A549 (cell line): ENCODE measurements at regions of chr19 and their contacts with region 1.

Region 1: DNA sequence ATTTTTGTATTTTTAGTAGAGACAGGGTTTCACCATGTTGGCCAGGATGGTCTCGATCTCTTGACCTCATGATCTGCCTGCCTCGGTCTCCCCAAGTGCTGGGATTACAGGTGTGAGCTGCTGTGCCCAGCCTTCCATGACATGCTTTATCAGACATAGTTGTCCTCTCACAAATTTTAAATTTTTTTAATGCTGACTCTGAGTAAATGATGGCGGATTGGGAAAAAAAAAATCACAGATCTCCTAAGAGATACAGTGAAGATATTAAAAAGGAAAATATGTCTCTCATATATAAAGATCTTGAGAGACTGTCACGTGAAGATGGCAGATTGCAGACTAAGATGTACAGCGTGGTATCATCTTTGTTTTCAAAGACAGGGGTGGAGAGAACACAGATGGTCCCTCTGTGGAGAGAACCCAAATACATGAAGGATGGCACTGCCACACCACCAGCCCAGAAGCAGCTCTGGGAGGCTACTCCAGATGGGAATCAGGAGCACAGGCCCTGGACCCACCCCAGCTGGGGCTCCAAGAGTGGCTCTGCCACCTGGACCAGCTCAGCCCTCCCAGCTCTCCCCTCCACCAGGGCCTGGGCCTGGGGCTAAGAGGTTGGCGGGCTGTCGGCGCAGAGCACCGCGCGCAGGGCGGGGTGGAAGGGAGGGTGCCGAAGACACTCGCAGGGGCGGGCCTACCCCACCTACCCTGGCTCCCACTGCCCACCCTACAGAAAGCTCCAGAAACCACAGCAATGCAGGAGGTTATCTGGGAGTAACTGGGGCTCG is 20.0 kb upstream of the CCNP start:
- DNase-seq: no peak
- ATAC-seq: no peak; a peak in 2 of 6 replicates
- H3K4me3 ChIP-seq: no peak overlapping the region
- H3K27ac ChIP-seq: no peak overlapping the region
- H3K4me1 ChIP-seq: no peaks in the 10 kb centered on the region
- CTCF ChIP-seq: no peak
- EP300 ChIP-seq: no peak
- POLR2A ChIP-seq: no peak
- RAD21 ChIP-seq: no peak

Region 2: GRCh38 chr19:40231544-40232424 is 14.7 kb before region 1 on chr19:
- CTCF ChIA-PET with region 1: interaction called, 11 read pairs
- POLR2A ChIA-PET with region 1: no interaction called
- DNase-seq: no peak
- ATAC-seq: peak; percentile 11 to 50; a peak in 5 of 6 replicates
- H3K4me3 ChIP-seq: no peak overlapping the region
- H3K27ac ChIP-seq: peak overlapping the region; percentile 43 to 71; a peak in 5 of 6 replicates
- H3K4me1 ChIP-seq: peaks cover 36% of the 10 kb centered on the region
- CTCF ChIP-seq: no peak
- EP300 ChIP-seq: no peak
- POLR2A ChIP-seq: no peak
- RAD21 ChIP-seq: no peak